Calu3 (cell line): ENCODE measurements at regions of chr7 and their contacts with region 1.

Region 1: GRCh38 chr7:13742811-13743210 is 246.7 kb downstream of the ETV1 start:
- DNase-seq: peak; percentile 41
- H3K4me3 Mint-ChIP-seq: no peak overlapping the region
- H3K27ac Mint-ChIP-seq: no peak overlapping the region
- H3K4me1 Mint-ChIP-seq: peaks cover 10% of the 10 kb centered on the region
- H3K27me3 Mint-ChIP-seq: no peaks in the 10 kb centered on the region
- CTCF ChIP-seq: peak; percentile 46

Region 2: DNA sequence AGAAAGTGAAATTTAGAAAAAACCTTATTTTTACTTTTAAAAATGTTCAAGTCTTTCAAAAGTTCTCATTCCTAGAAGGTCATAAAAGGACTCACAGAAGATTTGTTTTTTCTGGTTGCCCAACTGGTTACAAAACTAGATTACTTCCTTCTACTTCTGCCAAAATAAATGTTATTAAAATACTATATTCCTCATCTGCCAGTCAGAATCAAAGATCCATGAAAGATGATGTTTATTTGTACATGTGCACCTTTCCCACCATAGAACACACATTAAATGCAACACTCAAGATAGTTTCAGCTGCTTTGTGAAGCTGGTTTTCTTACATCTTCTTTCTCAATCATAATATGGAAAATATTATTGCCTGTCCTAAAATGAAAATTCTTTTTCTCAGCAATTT is 218.7 kb before region 1 on chr7:
- CTCF ChIA-PET with region 1: interaction called, 3 read pairs
- intact Hi-C with region 1: loop called (anchors 1 kb)
- DNase-seq: no peak
- H3K4me3 Mint-ChIP-seq: no peak overlapping the region
- H3K27ac Mint-ChIP-seq: no peak overlapping the region
- H3K4me1 Mint-ChIP-seq: no peaks in the 10 kb centered on the region
- H3K27me3 Mint-ChIP-seq: no peaks in the 10 kb centered on the region
- CTCF ChIP-seq: no peak

Region 3: DNA sequence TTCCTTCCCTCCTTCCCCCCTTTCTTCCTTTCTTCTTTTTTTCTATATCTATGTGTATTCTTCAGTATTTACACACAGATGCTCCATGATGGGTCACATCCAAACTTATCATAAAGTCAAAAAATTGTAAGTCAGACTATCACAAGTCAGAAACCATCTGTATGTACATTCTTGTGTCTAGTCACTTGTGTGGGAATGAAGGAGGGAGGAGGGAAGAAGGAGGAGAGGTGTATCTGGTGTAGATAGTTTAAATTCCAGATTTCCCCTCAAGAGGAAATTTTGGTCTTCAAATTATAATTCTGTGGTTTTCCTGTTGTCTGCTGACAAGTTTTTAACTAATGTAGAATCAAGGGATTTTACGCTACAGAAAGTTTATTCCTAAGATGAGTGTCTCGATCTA is 40.6 kb before region 1 on chr7:
- CTCF ChIA-PET with region 1: interaction called, 10 read pairs
- intact Hi-C with region 1: no loop called
- DNase-seq: no peak
- H3K4me3 Mint-ChIP-seq: no peak overlapping the region
- H3K27ac Mint-ChIP-seq: no peak overlapping the region
- H3K4me1 Mint-ChIP-seq: no peaks in the 10 kb centered on the region
- H3K27me3 Mint-ChIP-seq: no peaks in the 10 kb centered on the region
- CTCF ChIP-seq: no peak